Pancreas (tissue), 10 donors: ENCODE measurements at regions of chr13 and their contacts with region 1.

Region 1: GRCh38 chr13:114200399-114200911 is 21.4 kb downstream of the CFAP97D2 start:
- DNase-seq: no peak
- ATAC-seq: no peak
- H3K4me3 ChIP-seq: no peak overlapping the region
- H3K27ac ChIP-seq: no peak overlapping the region
- H3K4me1 ChIP-seq: no peaks in the 10 kb centered on the region
- H3K27me3 ChIP-seq: no peaks in the 10 kb centered on the region
- CTCF ChIP-seq: no peak

Region 2: DNA sequence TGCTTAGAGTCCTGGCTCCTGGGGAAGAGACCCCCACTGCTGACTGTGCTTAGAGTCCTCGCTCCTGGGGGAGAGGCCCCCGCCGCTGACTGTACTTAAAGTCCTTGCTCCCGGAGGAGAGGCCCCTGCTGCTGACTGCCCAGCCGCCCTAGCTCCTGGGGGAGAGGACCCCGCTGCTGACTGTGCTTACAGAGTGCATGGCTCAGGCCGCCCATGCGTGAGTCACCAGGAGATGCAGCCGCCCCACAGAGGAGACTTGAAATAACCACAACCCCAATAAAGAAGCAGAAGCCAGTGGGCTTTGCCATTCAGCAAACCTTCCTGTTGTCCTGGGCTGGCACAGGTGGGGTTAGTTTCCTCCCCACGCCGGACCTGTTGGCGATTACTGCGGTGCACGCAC is 147.4 kb before region 1 on chr13:
- intact Hi-C with region 1: loop called in 1 of 3 experiments (anchors 5 kb)
- DNase-seq: peak in 1 of 6 donors; percentile 34
- ATAC-seq: no peak
- H3K4me3 ChIP-seq: no peak overlapping the region
- H3K27ac ChIP-seq: no peak overlapping the region
- H3K4me1 ChIP-seq: peaks cover 0 to 3% (median 0%) of the 10 kb centered on the region in 3 donors
- H3K27me3 ChIP-seq: no peaks in the 10 kb centered on the region
- CTCF ChIP-seq: no peak